ENCODE measurements at regions of chr11 and their contacts with region 1.

Region 1: GRCh38 chr11:73350908-73351636 is 25.1 kb upstream of the RELT start:
- DNase-seq: peak; percentile 75
- ATAC-seq: peak; percentile 85
- H3K4me3 Mint-ChIP-seq: no peak overlapping the region
- H3K27ac Mint-ChIP-seq: no peak overlapping the region
- H3K4me1 Mint-ChIP-seq: peaks cover 2% of the 10 kb centered on the region
- H3K27me3 Mint-ChIP-seq: no peaks in the 10 kb centered on the region

Region 2: DNA sequence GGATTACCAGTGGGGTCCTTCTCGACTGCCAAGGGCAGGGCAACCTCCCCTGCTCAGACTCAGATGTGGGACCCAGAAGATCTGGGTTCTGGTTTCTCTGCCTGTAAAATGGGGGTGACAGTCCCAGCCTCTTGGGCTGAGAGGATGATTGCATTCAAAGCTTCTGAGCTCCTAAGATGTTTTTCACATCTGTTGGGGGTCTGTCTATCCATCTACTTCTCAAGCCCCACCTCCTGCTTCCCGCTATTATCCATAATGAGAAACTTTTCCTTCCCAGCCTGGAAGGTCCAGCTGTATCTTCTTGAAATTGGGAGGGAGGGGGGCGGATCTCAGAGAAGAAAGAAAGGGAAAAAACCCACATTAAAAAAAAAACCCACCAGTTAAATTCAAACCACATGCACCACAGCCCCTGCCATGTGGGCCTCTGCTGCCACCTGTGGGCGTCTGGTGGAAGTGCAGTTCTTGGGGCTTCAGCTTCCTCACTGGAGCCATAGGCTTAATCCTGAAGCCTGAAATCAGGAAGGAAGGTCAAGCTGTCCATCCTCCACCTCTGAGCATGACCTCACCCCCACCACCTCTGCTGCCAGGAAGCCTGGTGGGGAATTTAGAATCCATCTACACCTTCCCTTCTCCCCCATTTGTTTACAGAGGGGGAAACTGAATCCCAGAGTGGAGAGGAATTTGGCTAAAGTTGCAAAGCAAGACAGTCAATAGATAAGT is 15.7 kb before region 1 on chr11:
- CTCF ChIA-PET with region 1: interaction called, 19 read pairs
- POLR2A ChIA-PET with region 1: no interaction called
- intact Hi-C with region 1: no loop called
- DNase-seq: peak; percentile 86
- ATAC-seq: peak; percentile 63
- H3K4me3 Mint-ChIP-seq: no peak overlapping the region
- H3K27ac Mint-ChIP-seq: no peak overlapping the region
- H3K4me1 Mint-ChIP-seq: no peaks in the 10 kb centered on the region
- H3K27me3 Mint-ChIP-seq: no peaks in the 10 kb centered on the region

Region 3: DNA sequence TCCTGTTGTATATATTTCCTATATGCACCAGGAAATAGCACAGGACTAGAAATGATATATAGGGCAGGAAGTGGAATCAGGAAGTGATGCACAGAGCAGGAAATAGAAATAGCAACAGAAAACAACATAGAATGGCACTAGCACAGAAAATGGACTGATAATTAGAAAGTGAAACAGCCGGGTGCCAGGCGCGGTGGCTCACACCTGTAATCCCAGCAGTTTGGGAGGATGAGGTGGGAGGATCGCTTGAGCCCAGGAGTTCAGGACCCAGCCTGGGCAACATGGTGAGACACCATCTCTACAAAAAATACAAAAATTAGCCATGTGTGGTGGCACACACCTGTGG is 15.2 kb after region 1 on chr11:
- CTCF ChIA-PET with region 1: interaction called, 42 read pairs
- POLR2A ChIA-PET with region 1: no interaction called
- intact Hi-C with region 1: no loop called
- DNase-seq: peak; percentile 42
- ATAC-seq: peak; percentile 77
- H3K4me3 Mint-ChIP-seq: no peak overlapping the region
- H3K27ac Mint-ChIP-seq: peak overlapping the region; percentile 77
- H3K4me1 Mint-ChIP-seq: peaks cover 25% of the 10 kb centered on the region
- H3K27me3 Mint-ChIP-seq: no peaks in the 10 kb centered on the region

Region 4: DNA sequence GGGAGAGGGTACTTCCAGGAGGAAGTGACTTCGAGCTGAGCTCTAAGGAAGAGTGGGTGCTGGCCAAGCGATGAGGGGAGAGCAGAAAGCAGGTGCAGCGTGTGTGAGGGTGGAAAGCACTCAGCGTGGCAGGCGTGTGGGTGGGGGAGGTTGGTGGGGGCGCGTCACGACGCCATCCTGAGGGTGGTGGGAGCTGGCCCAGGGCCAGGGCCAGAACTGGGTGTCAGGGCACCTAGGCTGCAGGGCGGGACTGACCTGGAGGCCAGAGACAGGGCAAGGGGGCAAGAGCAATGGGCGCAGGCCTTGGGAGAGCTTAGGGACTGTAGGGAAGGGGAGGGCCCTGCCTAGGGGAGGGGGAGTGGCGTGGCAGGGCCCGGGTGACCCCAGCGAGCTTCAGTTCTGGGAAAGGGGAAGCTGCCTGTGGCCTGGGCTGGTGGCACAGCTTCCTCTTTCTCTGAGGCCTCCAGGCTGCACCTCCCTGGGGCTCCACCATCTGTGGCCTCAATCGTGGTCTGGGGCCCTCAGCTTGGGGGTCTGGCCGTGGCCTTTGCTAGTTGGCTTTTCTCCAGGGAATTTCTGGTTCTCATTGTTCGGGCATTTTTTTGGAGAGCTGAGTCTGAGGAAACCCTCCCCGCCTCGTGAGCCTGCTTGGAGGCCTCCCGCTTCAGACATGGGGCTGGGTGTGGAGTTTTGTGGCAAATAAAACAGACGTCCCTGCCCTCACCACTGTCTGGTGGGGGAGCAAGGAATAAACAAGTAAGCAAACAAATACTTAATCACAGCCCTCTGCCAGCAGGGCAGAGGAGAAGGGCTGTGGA is 34.0 kb after region 1 on chr11:
- CTCF ChIA-PET with region 1: interaction called, 10 read pairs
- POLR2A ChIA-PET with region 1: no interaction called
- intact Hi-C with region 1: no loop called
- DNase-seq: peak; percentile 56
- ATAC-seq: peak; percentile 76
- H3K4me3 Mint-ChIP-seq: no peak overlapping the region
- H3K27ac Mint-ChIP-seq: peak overlapping the region; percentile 65
- H3K4me1 Mint-ChIP-seq: peaks cover 52% of the 10 kb centered on the region
- H3K27me3 Mint-ChIP-seq: no peaks in the 10 kb centered on the region

Region 5: DNA sequence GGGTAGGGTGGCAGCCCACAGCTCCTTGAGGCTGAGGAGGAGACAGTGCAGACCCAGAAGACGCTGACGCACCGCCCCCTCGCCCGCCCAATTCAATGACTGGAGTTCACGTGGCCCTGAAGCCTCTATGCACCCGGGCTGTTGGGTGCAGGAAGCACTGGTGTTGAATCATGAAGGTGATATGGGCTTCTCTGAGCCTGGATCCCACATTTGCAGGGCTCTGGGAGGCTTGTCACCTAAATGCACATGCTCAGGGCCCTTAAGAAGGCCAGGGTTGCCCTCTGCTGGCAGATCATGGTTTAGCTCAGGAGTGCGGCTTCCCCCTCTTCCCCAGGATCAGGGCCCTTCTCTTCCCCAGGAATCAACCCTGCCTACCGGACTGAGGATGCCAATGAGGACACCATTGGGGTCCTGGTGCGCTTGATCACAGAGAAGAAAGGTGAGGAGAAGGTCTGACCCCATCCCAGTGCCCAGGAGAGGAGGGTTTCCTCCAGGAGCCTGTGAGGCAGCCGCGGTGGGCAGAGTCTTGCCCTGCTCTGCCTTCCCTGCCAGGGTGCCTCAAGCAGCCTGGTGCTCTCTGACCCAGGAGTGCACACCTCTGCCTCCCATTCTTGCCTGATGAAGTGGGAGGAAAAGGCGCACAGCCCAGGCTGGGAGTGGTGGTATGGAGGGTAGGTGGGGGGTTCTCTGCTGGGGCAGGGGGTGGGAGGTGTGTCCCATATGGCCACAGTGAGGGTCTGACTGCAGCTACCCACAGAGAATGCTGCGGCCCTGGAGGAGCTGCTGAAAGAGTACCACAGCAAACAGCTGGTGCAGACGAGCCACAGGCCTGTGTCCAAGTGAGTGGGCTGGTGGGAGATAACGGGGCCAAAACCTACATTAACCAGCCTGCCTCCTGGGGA is 42.7 kb after region 1 on chr11:
- CTCF ChIA-PET with region 1: interaction called, 52 read pairs
- POLR2A ChIA-PET with region 1: no interaction called
- intact Hi-C with region 1: loop called (anchors 1 kb)
- DNase-seq: peak; percentile 77
- ATAC-seq: peak; percentile 87
- H3K4me3 Mint-ChIP-seq: no peak overlapping the region
- H3K27ac Mint-ChIP-seq: no peak overlapping the region
- H3K4me1 Mint-ChIP-seq: no peaks in the 10 kb centered on the region
- H3K27me3 Mint-ChIP-seq: no peaks in the 10 kb centered on the region

Region 6: GRCh38 chr11:73404048-73404447 is 53.0 kb after region 1 on chr11:
- CTCF ChIA-PET with region 1: interaction called, 22 read pairs
- POLR2A ChIA-PET with region 1: no interaction called
- intact Hi-C with region 1: no loop called
- DNase-seq: peak; percentile 7
- ATAC-seq: no peak
- H3K4me3 Mint-ChIP-seq: no peak overlapping the region
- H3K27ac Mint-ChIP-seq: no peak overlapping the region
- H3K4me1 Mint-ChIP-seq: peaks cover 3% of the 10 kb centered on the region
- H3K27me3 Mint-ChIP-seq: no peaks in the 10 kb centered on the region

Region 7: GRCh38 chr11:73412308-73412707 is 61.2 kb after region 1 on chr11:
- CTCF ChIA-PET with region 1: interaction called, 10 read pairs
- POLR2A ChIA-PET with region 1: no interaction called
- intact Hi-C with region 1: no loop called
- DNase-seq: no peak
- ATAC-seq: no peak
- H3K4me3 Mint-ChIP-seq: no peak overlapping the region
- H3K27ac Mint-ChIP-seq: no peak overlapping the region
- H3K4me1 Mint-ChIP-seq: peaks cover 4% of the 10 kb centered on the region
- H3K27me3 Mint-ChIP-seq: no peaks in the 10 kb centered on the region

Region 8: DNA sequence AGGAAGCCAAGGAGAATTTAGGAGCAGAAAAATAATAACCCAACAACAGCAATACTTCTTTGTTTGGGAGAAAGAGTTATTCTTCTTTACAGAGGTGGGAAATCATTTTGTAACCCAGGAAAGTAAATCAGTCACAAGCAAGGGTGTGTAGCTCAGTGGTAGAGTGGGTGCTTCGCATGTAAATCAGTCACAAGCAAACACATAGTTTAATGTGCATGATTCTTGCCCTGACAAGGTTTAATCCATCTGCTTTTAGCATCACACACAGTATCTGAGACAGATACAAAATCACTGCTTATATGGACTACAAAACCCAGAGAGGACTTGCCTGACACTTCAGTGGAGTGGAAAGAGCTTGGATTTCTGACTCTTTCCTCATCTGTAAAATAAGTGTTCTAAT is 107.1 kb after region 1 on chr11:
- CTCF ChIA-PET with region 1: no interaction called
- POLR2A ChIA-PET with region 1: no interaction called
- intact Hi-C with region 1: no loop called
- DNase-seq: no peak
- ATAC-seq: no peak
- H3K4me3 Mint-ChIP-seq: no peak overlapping the region
- H3K27ac Mint-ChIP-seq: no peak overlapping the region
- H3K4me1 Mint-ChIP-seq: no peaks in the 10 kb centered on the region
- H3K27me3 Mint-ChIP-seq: no peaks in the 10 kb centered on the region